GM12878 (cell line): ENCODE measurements at regions of chr2 and their contacts with region 1.

Region 1: DNA sequence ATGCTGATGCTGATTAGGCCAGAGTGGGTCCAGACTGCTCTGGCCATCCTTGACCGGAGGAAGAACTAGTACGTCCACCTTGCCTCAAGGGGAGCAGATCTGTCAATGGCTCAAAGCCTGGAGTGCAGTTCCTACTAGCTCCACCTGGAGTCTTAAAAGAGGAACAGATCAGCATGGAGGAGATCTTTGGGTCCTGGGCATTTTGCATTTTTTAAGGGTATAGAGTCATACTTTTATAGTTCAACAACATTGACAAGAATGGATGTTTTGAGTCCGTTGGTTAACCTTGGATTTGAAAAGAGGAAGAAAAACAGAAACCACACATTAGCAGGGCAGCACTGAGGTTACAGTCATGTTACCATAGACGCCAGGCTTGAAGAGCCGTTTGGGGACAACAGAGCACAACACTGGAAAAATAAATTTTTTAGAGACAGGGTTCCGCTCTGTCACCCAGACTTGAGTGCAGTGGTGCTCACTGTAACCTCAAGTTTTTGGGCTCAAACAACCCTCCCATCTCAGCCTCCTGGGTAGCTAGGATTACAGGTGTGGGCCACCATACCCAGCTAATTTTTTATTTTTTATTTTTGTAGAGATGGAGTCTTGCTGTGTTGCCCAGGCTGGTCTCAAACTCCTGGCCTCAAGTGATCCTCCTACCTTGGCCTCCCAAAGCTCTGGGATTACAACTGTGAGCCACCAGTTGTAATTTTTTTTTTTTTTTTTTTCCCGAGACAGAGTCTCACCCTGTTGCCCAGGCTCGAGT is 78.5 kb downstream of the PRKCE start:
- DNase-seq: peak; percentile 88
- ATAC-seq: peak; percentile 79
- H3K4me3 ChIP-seq: no peak overlapping the region
- H3K27ac ChIP-seq: peak overlapping the region; percentile 72
- H3K4me1 ChIP-seq: peaks cover 44% of the 10 kb centered on the region
- H3K27me3 ChIP-seq: no peaks in the 10 kb centered on the region
- CTCF ChIP-seq: peak; percentile 43 to 70 (median 55)
- EP300 ChIP-seq: peak; percentile 93
- POLR2A ChIP-seq: no peak; the same call in 1 of the 2 replicates
- RAD21 ChIP-seq: peak; percentile 54

Region 2: DNA sequence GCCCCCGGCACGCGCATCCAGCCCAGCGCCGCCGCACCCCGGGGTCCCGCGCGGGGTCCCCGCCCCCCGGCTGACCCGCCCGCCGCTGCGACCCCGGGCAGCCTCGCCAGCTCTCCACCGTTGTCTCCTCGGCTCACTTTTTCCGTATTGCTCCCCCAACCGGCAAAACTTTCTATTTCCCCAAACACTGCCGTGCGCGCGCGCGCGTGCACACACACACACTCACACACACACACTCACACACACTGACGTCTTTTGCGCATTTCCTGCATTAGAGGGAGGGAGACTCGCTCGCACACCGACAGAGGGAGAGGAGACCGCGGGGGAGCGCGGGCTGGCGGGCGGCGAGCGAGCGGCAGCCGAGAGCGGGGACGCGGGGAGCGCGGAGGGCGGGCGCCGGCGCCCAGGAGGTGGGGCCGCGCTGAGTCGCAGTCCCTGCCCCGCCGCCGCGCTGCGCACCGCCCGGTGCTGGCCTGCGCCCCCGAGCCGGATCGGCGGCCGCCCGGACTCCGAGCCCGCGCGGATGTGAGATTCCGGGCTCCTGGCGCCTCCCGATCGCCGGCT is 79.0 kb before region 1 on chr2:
- CTCF ChIA-PET with region 1: interaction called, 6 read pairs
- POLR2A ChIA-PET with region 1: interaction called, 34 read pairs
- RAD21 ChIA-PET with region 1: interaction called, 79 read pairs
- SMC1A ChIA-PET with region 1: interaction called, 78 read pairs
- in situ Hi-C with region 1: loop called (anchors 5 kb)
- intact Hi-C with region 1: loop called (anchors 2 kb)
- DNase-seq: peak; percentile 76
- ATAC-seq: peak; percentile 79
- H3K4me3 ChIP-seq: peak overlapping the region; percentile 97
- H3K27ac ChIP-seq: peak overlapping the region; percentile 91
- H3K4me1 ChIP-seq: no peaks in the 10 kb centered on the region
- H3K27me3 ChIP-seq: no peaks in the 10 kb centered on the region
- CTCF ChIP-seq: peak; percentile 38 to 49 (median 48); a peak in 5 of 6 replicates
- EP300 ChIP-seq: peak; percentile 56 to 69; a peak in 1 of 4 replicates
- POLR2A ChIP-seq: peak; percentile 85
- RAD21 ChIP-seq: peak; percentile 57

Region 3: GRCh38 chr2:45691171-45691999 is 38.5 kb before region 1 on chr2:
- CTCF ChIA-PET with region 1: interaction called, 9 read pairs
- POLR2A ChIA-PET with region 1: interaction called, 5 read pairs
- RAD21 ChIA-PET with region 1: interaction called, 19 read pairs
- SMC1A ChIA-PET with region 1: interaction called, 29 read pairs
- in situ Hi-C with region 1: no loop called
- intact Hi-C with region 1: loop called (anchors 1 kb)
- DNase-seq: peak; percentile 52
- ATAC-seq: peak; percentile 84
- H3K4me3 ChIP-seq: peak overlapping the region; percentile 54
- H3K27ac ChIP-seq: peak overlapping the region; percentile 61
- H3K4me1 ChIP-seq: peaks cover 41% of the 10 kb centered on the region
- H3K27me3 ChIP-seq: no peaks in the 10 kb centered on the region
- CTCF ChIP-seq: no peak
- EP300 ChIP-seq: peak; percentile 79 to 89
- POLR2A ChIP-seq: no peak
- RAD21 ChIP-seq: no peak

Region 4: GRCh38 chr2:45712570-45712969 is 17.4 kb before region 1 on chr2:
- CTCF ChIA-PET with region 1: interaction called, 3 read pairs
- POLR2A ChIA-PET with region 1: interaction called, 12 read pairs
- RAD21 ChIA-PET with region 1: interaction called, 3 read pairs
- SMC1A ChIA-PET with region 1: interaction called, 4 read pairs
- in situ Hi-C with region 1: no loop called
- intact Hi-C with region 1: no loop called
- DNase-seq: no peak
- ATAC-seq: peak; percentile 30; the same call in 1 of the 3 replicates
- H3K4me3 ChIP-seq: no peak overlapping the region
- H3K27ac ChIP-seq: no peak overlapping the region
- H3K4me1 ChIP-seq: peaks cover 11% of the 10 kb centered on the region
- H3K27me3 ChIP-seq: no peaks in the 10 kb centered on the region
- CTCF ChIP-seq: peak in 1 of 3 experiments; percentile 14; a peak in 1 of 6 replicates
- EP300 ChIP-seq: no peak
- POLR2A ChIP-seq: no peak
- RAD21 ChIP-seq: 0 out of 2 replicates have a peak, but pooled peaks have one; percentile 28

Region 5: DNA sequence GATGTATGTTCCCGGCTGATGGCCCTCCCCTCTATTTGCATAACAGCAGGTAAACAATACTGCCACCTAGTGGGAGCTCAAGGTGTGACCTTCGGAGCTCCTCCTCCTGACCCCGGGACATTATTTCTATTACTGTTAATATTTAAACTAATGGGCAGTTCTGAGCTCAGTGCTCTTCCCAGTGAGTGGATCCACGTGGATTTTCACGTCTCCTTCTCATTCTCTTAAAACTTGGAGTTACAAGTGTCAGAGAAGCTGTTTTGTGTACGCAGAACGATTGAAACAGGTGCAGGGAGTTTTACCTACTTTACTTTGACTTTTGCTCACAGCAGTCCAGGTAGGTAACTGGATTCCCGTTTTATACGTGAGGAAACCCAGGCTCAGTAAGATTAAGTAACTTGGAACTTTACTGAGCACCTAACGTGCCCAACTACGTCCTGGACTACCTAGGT is 48.8 kb after region 1 on chr2:
- CTCF ChIA-PET with region 1: interaction called, 37 read pairs
- POLR2A ChIA-PET with region 1: no interaction called
- RAD21 ChIA-PET with region 1: interaction called, 9 read pairs
- SMC1A ChIA-PET with region 1: interaction called, 22 read pairs
- in situ Hi-C with region 1: no loop called
- intact Hi-C with region 1: no loop called
- DNase-seq: peak; percentile 11
- ATAC-seq: peak; percentile 90
- H3K4me3 ChIP-seq: no peak overlapping the region
- H3K27ac ChIP-seq: no peak overlapping the region
- H3K4me1 ChIP-seq: peaks cover 16% of the 10 kb centered on the region
- H3K27me3 ChIP-seq: no peaks in the 10 kb centered on the region
- CTCF ChIP-seq: peak; percentile 49 to 60 (median 53); a peak in 5 of 6 replicates
- EP300 ChIP-seq: no peak
- POLR2A ChIP-seq: no peak
- RAD21 ChIP-seq: peak; percentile 72